CD14-positive monocyte (primary cell): ENCODE measurements at regions of chr10 and their contacts with region 1.

Region 1: DNA sequence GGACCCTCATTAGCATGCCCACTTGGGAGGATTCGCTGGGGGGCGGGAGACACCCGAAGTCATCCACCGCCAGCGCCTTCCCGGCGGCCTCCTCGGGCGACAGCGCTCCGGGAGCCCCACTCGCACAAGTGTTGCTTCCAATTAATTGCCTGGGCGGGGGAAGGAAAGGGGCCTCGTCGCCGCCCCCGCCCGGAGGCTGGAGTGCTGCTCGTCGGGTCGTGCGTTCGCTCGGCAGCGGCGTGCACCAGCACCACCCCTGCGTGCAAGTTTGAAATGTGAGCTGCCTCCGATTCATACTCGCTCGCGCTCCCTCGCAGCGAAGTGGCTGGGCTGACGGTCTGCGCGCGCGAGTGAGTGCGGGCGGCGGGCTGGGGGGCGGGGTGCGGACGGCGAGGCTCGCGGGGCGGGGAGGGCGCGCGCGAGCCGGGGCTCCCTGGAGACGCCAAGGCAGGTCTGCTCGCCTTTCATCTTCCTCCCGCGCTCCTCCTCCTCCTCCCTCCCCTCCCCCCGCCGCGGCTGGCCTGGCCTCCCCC is 104.6 kb upstream of the PPIF start:
- DNase-seq: peak; percentile 49 to 68 (median 61)
- H3K4me3 ChIP-seq: peak overlapping the region; percentile 51 to 75 (median 57)
- H3K4me3 Mint-ChIP-seq: peak overlapping the region; percentile 68 to 79
- H3K27ac ChIP-seq: peak overlapping the region; percentile 87 to 95
- H3K27ac Mint-ChIP-seq: peak overlapping the region in 6 of 7 donors; percentile 8 to 98 (median 89)
- H3K4me1 ChIP-seq: peaks cover 82 to 88% of the 10 kb centered on the region in 2 donors
- H3K4me1 Mint-ChIP-seq: peaks cover 82% of the 10 kb centered on the region
- H3K27me3 ChIP-seq: no peaks in the 10 kb centered on the region
- H3K27me3 Mint-ChIP-seq: peaks cover 0 to 2% (median 0%) of the 10 kb centered on the region in 3 donors
- CTCF ChIP-seq: no peak

Region 2: GRCh38 chr10:79266543-79267312 is 24.0 kb after region 1 on chr10:
- intact Hi-C with region 1: loop called (anchors 2 to 5 kb)
- DNase-seq: peak; percentile 96 to 98 (median 98)
- H3K4me3 ChIP-seq: peak overlapping the region in 1 of 3 experiments; percentile 42
- H3K4me3 Mint-ChIP-seq: peak overlapping the region; percentile 43 to 74
- H3K27ac ChIP-seq: peak overlapping the region; percentile 98 to 100
- H3K27ac Mint-ChIP-seq: peak overlapping the region; percentile 99 to 100 (median 99)
- H3K4me1 ChIP-seq: peaks cover 79 to 86% of the 10 kb centered on the region in 2 donors
- H3K4me1 Mint-ChIP-seq: peaks cover 95% of the 10 kb centered on the region
- H3K27me3 ChIP-seq: no peaks in the 10 kb centered on the region
- H3K27me3 Mint-ChIP-seq: peaks cover 0 to 3% (median 0%) of the 10 kb centered on the region in 3 donors
- CTCF ChIP-seq: no peak

Region 3: DNA sequence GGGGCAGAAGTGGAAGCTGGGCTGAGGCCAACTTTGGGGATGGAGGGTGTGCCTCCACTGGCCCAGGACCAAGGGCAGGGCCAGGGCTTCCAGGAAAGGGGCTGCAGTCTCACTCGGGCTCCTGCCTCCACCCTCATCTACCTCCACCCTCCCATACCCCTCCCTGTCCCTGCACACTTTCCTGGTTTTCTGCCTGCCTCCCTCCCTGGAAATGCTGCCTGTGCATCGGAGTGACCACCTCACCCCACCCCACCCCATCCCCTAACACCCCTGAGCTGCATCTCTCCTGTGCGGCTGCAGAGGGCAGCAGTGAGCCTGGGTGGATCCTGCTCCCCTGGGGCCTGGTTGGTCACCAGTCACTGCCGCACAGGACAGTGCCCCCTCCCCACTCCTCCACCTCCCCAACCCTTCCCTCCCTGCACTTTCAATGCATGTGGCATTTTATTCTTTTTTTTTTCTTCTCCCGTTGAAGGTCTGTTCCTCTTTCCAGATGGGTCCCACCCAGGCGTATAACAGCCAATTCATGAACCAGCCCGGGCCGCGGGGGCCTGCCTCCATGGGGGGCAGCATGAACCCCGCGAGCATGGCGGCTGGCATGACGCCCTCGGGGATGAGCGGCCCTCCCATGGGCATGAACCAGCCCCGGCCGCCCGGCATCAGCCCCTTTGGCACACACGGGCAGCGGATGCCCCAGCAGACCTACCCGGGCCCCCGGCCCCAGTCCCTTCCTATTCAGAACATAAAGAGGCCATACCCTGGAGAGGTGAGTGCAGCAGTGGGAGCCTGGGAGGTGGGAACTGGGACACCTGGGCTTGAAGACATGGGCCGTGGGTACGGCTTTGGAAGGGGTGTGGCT is 50.4 kb after region 1 on chr10:
- intact Hi-C with region 1: loop called (anchors 2 to 10 kb)
- DNase-seq: peak; percentile 82 to 84 (median 84)
- H3K4me3 ChIP-seq: no peak overlapping the region
- H3K4me3 Mint-ChIP-seq: peak overlapping the region; percentile 30 to 55
- H3K27ac ChIP-seq: peak overlapping the region; percentile 98 to 99
- H3K27ac Mint-ChIP-seq: peak overlapping the region; percentile 97 to 100 (median 100)
- H3K4me1 ChIP-seq: peaks cover 56 to 66% of the 10 kb centered on the region in 2 donors
- H3K4me1 Mint-ChIP-seq: peaks cover 69% of the 10 kb centered on the region
- H3K27me3 ChIP-seq: no peaks in the 10 kb centered on the region
- H3K27me3 Mint-ChIP-seq: peaks cover 0 to 1% (median 0%) of the 10 kb centered on the region in 3 donors
- CTCF ChIP-seq: peak; percentile 80

Region 4: DNA sequence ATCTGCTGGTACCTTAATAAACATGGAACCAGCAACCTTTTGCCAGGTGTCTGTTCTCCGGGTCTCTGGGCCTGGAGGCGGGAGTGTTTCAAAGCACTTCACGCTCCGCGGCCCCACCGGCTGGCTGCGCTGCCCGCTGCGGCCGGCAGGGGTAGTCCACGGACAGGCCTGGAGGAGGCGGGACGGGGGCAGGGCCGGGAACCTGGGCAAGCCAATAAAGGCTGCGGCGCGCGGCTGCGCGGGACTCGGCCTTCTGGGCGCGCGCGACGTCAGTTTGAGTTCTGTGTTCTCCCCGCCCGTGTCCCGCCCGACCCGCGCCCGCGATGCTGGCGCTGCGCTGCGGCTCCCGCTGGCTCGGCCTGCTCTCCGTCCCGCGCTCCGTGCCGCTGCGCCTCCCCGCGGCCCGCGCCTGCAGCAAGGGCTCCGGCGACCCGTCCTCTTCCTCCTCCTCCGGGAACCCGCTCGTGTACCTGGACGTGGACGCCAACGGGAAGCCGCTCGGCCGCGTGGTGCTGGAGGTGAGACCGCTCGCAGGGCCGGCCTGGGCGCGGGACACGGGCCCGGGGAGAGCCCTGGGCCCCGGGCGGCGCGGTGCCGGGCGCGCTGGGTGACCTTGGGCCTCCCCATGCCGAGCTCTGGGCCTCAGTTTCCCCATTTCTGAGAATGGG is 104.7 kb after region 1 on chr10 and contains the start of gene PPIF:
- intact Hi-C with region 1: loop called (anchors 5 to 10 kb)
- DNase-seq: peak; percentile 91 to 94 (median 93)
- H3K4me3 ChIP-seq: peak within 1 kb of the TSS; percentile 59 to 88 (median 83)
- H3K4me3 Mint-ChIP-seq: peak within 1 kb of the TSS; percentile 91 to 92
- H3K27ac ChIP-seq: peak within 1 kb of the TSS; percentile 96 to 99
- H3K27ac Mint-ChIP-seq: peak within 1 kb of the TSS; percentile 96 to 98 (median 97)
- H3K4me1 ChIP-seq: peaks cover 72 to 83% of the 10 kb centered on the region in 2 donors
- H3K4me1 Mint-ChIP-seq: peaks cover 66% of the 10 kb centered on the region
- H3K27me3 ChIP-seq: no peaks in the 10 kb centered on the region
- H3K27me3 Mint-ChIP-seq: peaks cover 1 to 4% (median 4%) of the 10 kb centered on the region in 3 donors
- CTCF ChIP-seq: peak; percentile 99
- polyA plus RNA-seq, gene PPIF: 36.6 to 1,064 (median 52.3) TPM

Region 5: GRCh38 chr10:79445141-79445976 is 202.7 kb after region 1 on chr10 and contains the start of gene ZCCHC24:
- intact Hi-C with region 1: loop called in 1 of 2 experiments (anchors 10 kb)
- DNase-seq: peak; percentile 93 to 97 (median 94)
- H3K4me3 ChIP-seq: peak within 1 kb of the TSS; percentile 67 to 81 (median 67)
- H3K4me3 Mint-ChIP-seq: peak within 1 kb of the TSS; percentile 97 to 98
- H3K27ac ChIP-seq: peak within 1 kb of the TSS; percentile 43 to 68
- H3K27ac Mint-ChIP-seq: peak within 1 kb of the TSS; percentile 83 to 94 (median 92)
- H3K4me1 ChIP-seq: peaks cover 27 to 39% of the 10 kb centered on the region in 2 donors
- H3K4me1 Mint-ChIP-seq: peaks cover 38% of the 10 kb centered on the region
- H3K27me3 ChIP-seq: peaks cover 0 to 18% of the 10 kb centered on the region in 2 donors
- H3K27me3 Mint-ChIP-seq: peaks cover 19 to 31% (median 23%) of the 10 kb centered on the region in 3 donors
- CTCF ChIP-seq: no peak
- polyA plus RNA-seq, gene ZCCHC24: 3.9 to 5.0 (median 4.0) TPM